KBM-7 (cell line): ENCODE measurements at regions of chr2 and their contacts with region 1.

Region 1: GRCh38 chr2:131673392-131674173 is 145.9 kb downstream of the CCDC74A start:
- DNase-seq: peak; percentile 85

Region 2: GRCh38 chr2:131413148-131413747 is 260.3 kb before region 1 on chr2:
- in situ Hi-C with region 1: no loop called
- DNase-seq: peak; percentile 79

Region 3: GRCh38 chr2:131521961-131522794 is 151.4 kb before region 1 on chr2:
- in situ Hi-C with region 1: loop called (anchors 25 kb)
- DNase-seq: no peak

Region 4: DNA sequence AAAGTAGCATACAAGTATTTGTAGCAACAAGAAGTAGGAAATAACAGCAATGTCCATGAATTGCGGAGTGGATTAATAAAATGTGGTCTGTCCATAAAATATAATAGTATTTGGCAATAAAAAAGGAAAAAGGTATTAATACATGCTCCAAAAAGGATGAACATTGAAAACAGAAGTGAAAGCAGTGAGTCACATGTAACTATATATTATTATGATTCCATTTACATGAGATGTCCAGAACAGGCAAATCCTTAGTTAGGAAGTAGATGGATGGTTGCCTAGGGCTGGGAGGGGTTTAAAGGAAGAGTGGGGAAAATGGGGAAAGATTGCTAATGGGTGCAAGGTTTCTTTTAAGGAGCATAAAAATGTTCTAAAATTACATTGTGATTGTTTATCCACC is 101.4 kb before region 1 on chr2:
- in situ Hi-C with region 1: no loop called
- DNase-seq: no peak